Psoas muscle (tissue), 8 donors: ENCODE measurements at regions of chr20 and their contacts with region 1.

Region 1: DNA sequence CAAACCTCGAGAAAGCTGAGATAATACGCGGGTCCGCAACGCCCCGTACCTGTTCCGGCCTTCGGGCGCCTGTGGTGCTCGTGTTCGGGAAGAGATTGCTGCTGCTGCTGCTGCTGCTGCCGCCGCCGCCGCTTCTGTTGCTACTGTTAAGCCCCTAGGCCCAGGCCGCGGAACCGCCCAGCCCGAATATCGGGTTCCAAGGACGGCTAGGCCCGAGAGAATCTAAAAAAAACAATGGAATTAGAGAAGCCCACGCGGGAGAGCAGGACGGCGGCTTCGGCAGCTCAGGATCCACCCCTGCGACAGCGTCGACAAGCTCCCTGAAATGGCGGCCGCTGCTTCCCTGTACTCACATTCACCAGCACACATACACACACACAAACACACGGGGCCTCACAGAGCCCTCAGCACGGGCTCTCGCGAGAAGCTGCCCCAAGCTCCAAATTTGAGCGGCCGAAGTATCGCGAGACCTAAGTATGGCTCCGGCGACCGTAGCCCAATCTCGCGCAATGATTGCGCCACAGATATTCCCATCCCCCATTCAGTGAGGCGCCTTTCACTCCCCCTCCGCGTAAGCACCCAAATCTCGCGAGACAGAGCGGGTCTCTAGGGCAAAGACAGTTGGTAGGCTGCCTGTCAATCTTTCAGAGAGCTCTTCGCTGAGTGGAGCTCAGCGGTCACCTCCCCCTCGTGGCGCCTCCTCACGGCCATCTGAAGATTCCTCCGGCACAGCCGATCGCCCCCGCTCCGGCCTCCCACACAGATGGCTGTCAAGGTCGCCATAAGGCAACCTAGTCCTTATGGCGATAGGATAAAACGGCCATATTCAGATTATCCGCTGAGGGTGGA is at the start of gene RBM39:
- DNase-seq: peak; percentile 99 to 100
- ATAC-seq: peak; percentile 92 to 94 (median 94)
- H3K4me3 ChIP-seq: peak within 1 kb of the TSS; percentile 94
- H3K27ac ChIP-seq: peak within 1 kb of the TSS; percentile 95
- H3K4me1 ChIP-seq: peaks cover 36% of the 10 kb centered on the region
- H3K27me3 ChIP-seq: no peaks in the 10 kb centered on the region
- CTCF ChIP-seq: peak; percentile 41
- total RNA-seq, gene RBM39: 93.0 to 171 (median 139) TPM

Region 2: GRCh38 chr20:35699127-35699975 is 42.8 kb before region 1 on chr20 and contains the starts of genes NFS1 and ROMO1:
- intact Hi-C with region 1: loop called in 1 of 2 experiments (anchors 5 kb)
- DNase-seq: peak; percentile 89 to 94
- ATAC-seq: peak; percentile 88 to 91 (median 90)
- H3K4me3 ChIP-seq: peak within 1 kb of the TSS; percentile 94
- H3K27ac ChIP-seq: peak within 1 kb of the TSS; percentile 95
- H3K4me1 ChIP-seq: peaks cover 35% of the 10 kb centered on the region
- H3K27me3 ChIP-seq: no peaks in the 10 kb centered on the region
- CTCF ChIP-seq: peak; percentile 16
- total RNA-seq, gene NFS1: 23.6 to 45.0 (median 40.3) TPM
- total RNA-seq, gene ROMO1: 133 to 172 (median 143) TPM

Region 3: GRCh38 chr20:35711588-35712209 is 30.4 kb before region 1 on chr20:
- intact Hi-C with region 1: no loop called
- DNase-seq: no peak
- ATAC-seq: no peak
- H3K4me3 ChIP-seq: no peak overlapping the region
- H3K27ac ChIP-seq: peak overlapping the region; percentile 28
- H3K4me1 ChIP-seq: peaks cover 48% of the 10 kb centered on the region
- H3K27me3 ChIP-seq: no peaks in the 10 kb centered on the region
- CTCF ChIP-seq: no peak

Region 4: DNA sequence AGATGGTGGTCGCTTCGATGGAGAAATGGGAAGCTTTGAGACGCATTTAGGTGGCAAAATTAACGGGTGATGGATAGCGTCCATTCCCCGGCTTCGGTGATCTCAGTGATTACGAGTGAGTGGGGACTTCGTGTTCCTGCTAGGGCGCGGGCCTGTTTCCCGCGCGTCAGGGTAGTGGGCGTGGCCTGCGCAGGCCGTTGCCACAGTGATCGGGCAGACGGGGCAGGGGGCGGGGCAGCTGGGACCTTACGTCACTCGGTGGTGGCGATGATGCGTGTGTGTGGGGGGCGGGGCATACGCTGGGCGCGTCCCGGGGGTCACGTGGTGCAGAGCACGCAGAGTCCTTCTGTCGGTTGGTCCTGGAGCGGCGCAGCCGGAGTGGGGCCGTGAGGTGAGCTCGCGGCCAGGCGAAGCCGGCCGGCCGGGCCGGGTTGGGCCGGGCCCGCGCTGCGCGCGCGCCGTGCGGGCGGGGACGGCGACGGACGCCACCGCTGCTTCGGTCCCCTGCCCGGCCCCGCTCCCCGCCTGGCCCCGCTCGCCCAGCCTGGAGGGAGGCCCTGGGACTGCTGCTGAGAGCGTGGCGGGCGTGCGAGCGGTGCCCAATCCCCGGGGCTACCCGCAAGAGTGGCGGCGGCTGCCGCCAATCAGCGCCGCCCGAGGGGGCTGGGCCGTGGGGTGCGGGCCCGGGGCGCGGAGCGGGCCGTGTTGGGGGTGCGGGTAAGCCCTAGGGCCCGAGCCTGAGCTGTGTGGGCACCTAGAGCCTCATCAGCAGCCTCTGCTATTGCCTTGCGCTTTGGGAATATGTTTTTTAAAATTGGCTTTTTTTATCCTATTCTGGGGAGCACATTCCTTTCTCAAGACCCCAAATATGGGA is 29.8 kb after region 1 on chr20 and contains the start of gene PHF20:
- intact Hi-C with region 1: loop called (anchors 1 kb)
- DNase-seq: peak; percentile 100
- ATAC-seq: peak; percentile 84 to 90 (median 87)
- H3K4me3 ChIP-seq: peak within 1 kb of the TSS; percentile 90
- H3K27ac ChIP-seq: peak within 1 kb of the TSS; percentile 96
- H3K4me1 ChIP-seq: peaks cover 57% of the 10 kb centered on the region
- H3K27me3 ChIP-seq: no peaks in the 10 kb centered on the region
- CTCF ChIP-seq: no peak
- total RNA-seq, gene PHF20: 57.7 to 97.9 (median 68.4) TPM

Region 5: DNA sequence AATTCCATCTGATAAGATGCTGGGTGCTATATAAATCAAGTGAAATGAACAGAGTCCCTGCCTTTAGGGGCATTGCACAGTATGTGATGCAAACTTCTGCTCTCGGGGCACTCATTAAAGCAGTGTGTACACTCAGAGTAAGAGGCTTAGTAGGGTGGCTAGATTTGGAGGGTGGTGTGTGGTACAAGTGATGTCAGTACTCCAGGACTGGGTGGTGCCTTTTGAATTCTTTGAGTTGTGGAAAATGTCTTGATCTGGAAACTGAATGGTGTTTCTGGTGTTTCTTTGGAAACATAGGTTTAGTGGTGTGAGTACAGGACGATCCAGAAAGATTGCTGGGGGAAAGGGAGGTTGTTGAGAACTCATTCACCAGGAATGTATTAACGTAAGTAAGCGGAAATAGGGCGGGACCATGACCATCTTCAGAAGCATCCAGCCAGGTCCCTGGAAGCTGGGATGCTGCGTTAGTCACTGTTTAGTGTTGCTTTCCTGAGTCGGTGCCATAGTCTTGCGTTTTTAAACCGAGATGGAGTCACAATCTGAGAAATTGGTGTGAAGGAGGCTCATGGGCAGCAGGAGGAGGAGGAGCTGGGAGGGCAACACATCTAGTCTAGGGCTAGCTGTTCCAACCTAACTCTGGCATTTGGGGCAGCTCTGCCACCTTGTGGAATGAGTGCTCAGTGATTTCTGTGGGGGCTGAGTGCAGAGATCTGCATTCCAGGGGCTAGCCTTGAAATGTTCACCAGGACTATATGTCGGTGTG is 141.8 kb after region 1 on chr20:
- intact Hi-C with region 1: loop called (anchors 5 kb)
- DNase-seq: peak; percentile 77 to 85
- ATAC-seq: peak; percentile 82 to 87 (median 83)
- H3K4me3 ChIP-seq: no peak overlapping the region
- H3K27ac ChIP-seq: peak overlapping the region; percentile 80
- H3K4me1 ChIP-seq: peaks cover 45% of the 10 kb centered on the region
- H3K27me3 ChIP-seq: no peaks in the 10 kb centered on the region
- CTCF ChIP-seq: peak; percentile 77